OCI-LY7 (cell line): ENCODE measurements at regions of chr4 and their contacts with region 1.

Region 1: DNA sequence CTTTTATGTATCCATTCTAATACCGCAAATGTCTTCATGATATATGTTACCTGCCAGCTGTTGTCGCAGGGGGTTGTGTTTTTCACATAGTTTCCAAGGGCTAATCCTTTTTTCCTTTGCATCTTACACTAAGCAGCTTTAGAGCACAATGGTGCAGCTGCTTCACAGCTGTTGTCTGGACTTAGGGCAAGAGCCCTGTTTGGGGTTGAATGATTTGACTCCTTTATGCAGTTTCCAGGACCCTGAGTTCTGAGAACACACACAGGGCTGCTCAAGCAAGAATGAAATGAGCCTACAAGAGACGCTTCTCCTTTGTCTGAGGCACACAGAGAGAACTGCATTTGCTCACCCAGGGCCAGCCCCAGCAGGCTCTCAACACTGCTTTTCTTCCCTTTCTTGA is 20.2 kb downstream of the CCNG2 start:
- DNase-seq: no peak
- H3K4me3 ChIP-seq: no peak overlapping the region
- H3K27ac ChIP-seq: no peak overlapping the region
- H3K4me1 ChIP-seq: no peaks in the 10 kb centered on the region
- CTCF ChIP-seq: no peak

Region 2: GRCh38 chr4:77187322-77187721 is 10.1 kb after region 1 on chr4:
- CTCF ChIA-PET with region 1: interaction called, 4 read pairs
- POLR2A ChIA-PET with region 1: interaction called, 10 read pairs
- intact Hi-C with region 1: no loop called
- DNase-seq: no peak
- H3K4me3 ChIP-seq: no peak overlapping the region
- H3K27ac ChIP-seq: no peak overlapping the region
- H3K4me1 ChIP-seq: no peaks in the 10 kb centered on the region
- CTCF ChIP-seq: no peak

Region 3: DNA sequence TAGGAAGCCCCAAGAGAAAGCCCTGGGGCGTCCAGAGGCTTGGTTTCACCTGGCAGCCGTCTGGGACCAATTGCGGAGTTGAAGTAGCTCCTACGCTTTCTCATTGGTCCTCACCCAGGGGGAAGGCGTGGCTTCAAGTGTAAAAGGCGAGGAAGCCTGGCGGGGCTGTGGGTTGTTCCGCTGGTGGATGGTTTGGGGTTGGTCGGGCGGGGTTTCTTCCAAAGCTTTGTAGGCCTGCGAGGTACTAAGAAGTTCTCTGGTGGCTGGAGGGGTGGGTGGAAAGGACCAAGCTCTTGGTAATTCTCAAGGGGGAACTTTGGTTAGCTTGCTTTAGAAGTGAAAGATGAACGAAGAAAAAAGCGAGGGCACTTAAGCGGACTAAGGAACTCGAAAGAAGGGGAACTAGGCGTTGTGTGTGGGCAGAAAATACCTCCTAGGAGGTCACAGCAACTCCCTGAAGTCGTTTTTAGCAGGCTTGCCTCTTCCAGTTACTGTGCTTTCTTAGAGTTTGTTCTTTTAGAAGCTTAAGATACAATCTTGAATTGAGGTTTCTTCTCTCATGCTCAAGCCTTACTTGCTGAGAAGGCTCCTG is 16.4 kb after region 1 on chr4:
- CTCF ChIA-PET with region 1: interaction called, 4 read pairs
- POLR2A ChIA-PET with region 1: interaction called, 12 read pairs
- intact Hi-C with region 1: no loop called
- DNase-seq: peak; percentile 89
- H3K4me3 ChIP-seq: peak overlapping the region; percentile 46
- H3K27ac ChIP-seq: peak overlapping the region; percentile 18
- H3K4me1 ChIP-seq: peaks cover 13% of the 10 kb centered on the region
- CTCF ChIP-seq: no peak

Region 4: DNA sequence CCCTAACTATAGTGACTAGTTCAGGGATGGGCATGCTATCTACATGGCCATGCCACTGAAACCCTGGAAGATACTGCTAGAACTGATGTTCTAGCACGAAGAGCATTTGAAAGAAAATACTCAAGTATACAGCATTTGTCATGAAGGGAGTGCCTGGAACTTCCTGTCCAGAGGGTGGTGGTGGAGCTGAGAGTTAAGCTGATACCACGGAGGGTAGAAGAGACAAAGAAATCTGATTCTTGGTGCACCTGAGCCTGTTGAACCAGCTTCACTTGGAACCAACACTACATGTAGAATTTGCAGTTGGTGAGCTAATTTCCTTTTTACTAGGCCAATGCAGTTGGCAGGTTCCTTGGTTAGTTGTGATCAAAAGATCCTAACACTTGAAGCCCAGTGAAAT is 96.2 kb after region 1 on chr4:
- CTCF ChIA-PET with region 1: no interaction called
- POLR2A ChIA-PET with region 1: no interaction called
- intact Hi-C with region 1: no loop called
- DNase-seq: no peak
- H3K4me3 ChIP-seq: no peak overlapping the region
- H3K27ac ChIP-seq: no peak overlapping the region
- H3K4me1 ChIP-seq: no peaks in the 10 kb centered on the region
- CTCF ChIP-seq: no peak

Region 5: DNA sequence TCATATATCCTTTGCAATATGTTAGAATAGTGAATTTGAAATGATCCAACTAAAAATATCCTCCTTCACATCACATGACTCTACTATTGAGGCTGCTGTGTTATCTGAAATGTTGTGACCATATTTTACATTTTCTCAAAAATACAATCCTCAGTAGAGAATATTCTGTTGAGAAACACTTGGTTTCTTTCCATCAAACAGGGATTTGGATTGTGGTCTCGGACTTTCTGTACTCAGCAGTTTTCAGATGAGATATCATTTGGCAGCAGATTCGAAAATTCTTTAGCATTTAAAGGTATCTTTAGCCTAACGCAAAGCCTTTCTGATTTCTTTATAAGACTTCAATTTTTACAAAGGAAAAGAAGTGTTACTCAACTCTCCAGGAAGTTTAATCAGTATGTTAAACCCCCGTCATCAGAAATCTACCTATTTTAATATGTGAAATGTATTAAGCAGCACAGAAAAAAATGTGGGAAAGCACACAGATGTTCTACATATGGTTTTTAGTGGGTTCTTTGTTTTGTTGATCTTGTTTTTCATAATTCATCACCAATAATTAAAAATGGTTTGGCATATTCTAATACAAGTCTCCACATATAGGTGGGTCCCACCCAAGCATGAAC is 1318.9 kb after region 1 on chr4:
- CTCF ChIA-PET with region 1: no interaction called
- POLR2A ChIA-PET with region 1: no interaction called
- intact Hi-C with region 1: no loop called
- DNase-seq: no peak
- H3K4me3 ChIP-seq: no peak overlapping the region
- H3K27ac ChIP-seq: no peak overlapping the region
- H3K4me1 ChIP-seq: no peaks in the 10 kb centered on the region
- CTCF ChIP-seq: no peak